CD4-positive, alpha-beta T cell (primary cell): ENCODE measurements at regions of chr14 and their contacts with region 1.

Region 1: DNA sequence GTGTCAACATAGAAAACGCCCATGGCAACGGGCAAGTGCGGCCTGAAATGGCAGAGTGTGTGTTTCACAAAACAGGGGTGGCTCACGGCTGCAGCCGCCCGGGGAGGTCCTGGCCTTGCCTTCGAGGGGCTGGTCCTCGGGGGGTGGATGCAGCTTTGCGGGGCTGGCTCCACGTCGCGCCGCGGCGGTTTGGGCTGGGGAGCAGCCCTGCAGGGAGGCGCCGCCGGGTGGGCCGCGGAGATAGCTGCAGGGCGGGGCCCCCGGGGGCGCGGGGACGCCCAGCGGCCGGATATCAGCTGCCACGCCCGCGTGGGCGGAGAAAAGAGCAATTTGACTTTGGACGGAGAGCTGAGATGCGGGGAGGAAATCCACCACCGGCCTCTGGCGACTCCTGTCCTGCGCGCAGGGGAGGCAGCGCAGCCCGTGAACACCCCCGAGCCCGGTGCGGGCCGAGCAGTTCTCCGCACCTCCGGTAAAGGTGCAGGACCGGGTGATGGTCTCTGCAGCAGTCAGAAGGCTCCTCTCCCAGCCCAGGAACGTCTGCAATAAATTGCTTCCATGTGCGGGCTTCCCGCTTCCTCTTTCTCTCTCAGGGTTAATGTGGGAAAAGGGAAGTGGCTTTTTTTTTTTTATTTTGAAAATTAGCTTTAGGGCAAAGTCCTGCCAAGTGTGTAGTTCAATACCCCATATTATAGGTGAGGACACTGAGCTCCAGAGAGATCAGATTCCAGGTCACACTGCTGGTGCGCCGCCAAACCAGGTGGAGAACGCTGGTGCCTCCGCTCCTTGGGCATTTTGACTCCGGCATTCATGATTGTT is 110.5 kb downstream of the ARF6 start:
- DNase-seq: peak; percentile 41 to 89 (median 70)
- ATAC-seq: peak; percentile 13
- H3K4me3 ChIP-seq: peak overlapping the region; percentile 61
- H3K4me3 Mint-ChIP-seq: peak overlapping the region; percentile 91
- H3K27ac ChIP-seq: peak overlapping the region; percentile 95 to 96
- H3K27ac Mint-ChIP-seq: peak overlapping the region; percentile 95
- H3K4me1 ChIP-seq: peaks cover 65% of the 10 kb centered on the region
- H3K4me1 Mint-ChIP-seq: peaks cover 59% of the 10 kb centered on the region
- H3K27me3 ChIP-seq: no peaks in the 10 kb centered on the region
- H3K27me3 Mint-ChIP-seq: no peaks in the 10 kb centered on the region
- CTCF ChIP-seq: peak; percentile 26

Region 2: GRCh38 chr14:49879683-49880204 is 123.7 kb before region 1 on chr14:
- CTCF ChIA-PET with region 1: interaction called, 6 read pairs
- POLR2A ChIA-PET with region 1: interaction called, 12 read pairs
- intact Hi-C with region 1: no loop called
- DNase-seq: peak; percentile 22 to 86 (median 38)
- ATAC-seq: peak; percentile 94
- H3K4me3 ChIP-seq: no peak overlapping the region
- H3K4me3 Mint-ChIP-seq: no peak overlapping the region
- H3K27ac ChIP-seq: no peak overlapping the region
- H3K27ac Mint-ChIP-seq: peak overlapping the region; percentile 64
- H3K4me1 ChIP-seq: peaks cover 17% of the 10 kb centered on the region
- H3K4me1 Mint-ChIP-seq: peaks cover 18% of the 10 kb centered on the region
- H3K27me3 ChIP-seq: no peaks in the 10 kb centered on the region
- H3K27me3 Mint-ChIP-seq: no peaks in the 10 kb centered on the region
- CTCF ChIP-seq: peak; percentile 46

Region 3: DNA sequence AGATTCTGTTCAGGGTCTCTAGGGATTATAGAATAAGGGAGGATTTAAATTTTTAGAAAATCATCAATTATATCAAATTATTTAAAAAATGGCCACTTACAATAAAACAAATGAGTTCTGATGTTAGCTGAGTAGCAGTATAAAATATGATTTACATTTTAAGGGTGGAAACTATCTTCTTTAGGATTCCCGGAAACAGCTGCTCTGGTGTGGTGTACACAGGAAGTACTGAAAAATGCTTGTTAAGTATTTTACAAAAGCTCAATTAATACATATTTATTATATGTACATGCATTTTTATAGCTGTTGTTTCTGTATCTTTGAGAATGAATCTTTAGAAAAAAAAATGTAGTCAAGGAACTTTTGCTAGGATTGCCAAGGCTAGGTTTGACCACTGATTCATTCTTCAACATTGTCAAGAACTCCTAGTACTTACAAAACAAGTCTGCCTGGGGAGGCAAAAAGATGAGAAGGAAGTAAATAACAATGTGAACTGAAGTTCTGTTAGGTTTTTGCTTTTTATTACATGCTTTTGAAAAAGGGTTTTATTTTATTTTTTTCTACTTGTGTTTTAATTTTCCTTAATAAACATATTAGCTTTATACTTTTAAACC is 62.5 kb before region 1 on chr14:
- CTCF ChIA-PET with region 1: interaction called, 3 read pairs
- POLR2A ChIA-PET with region 1: interaction called, 40 read pairs
- intact Hi-C with region 1: loop called (anchors 2 to 5 kb)
- DNase-seq: peak in 6 of 14 experiments; percentile 10 to 75 (median 34)
- ATAC-seq: peak; percentile 68
- H3K4me3 ChIP-seq: peak overlapping the region; percentile 19
- H3K4me3 Mint-ChIP-seq: peak overlapping the region; percentile 69
- H3K27ac ChIP-seq: peak overlapping the region in 1 of 2 donors; percentile 38
- H3K27ac Mint-ChIP-seq: peak overlapping the region; percentile 57
- H3K4me1 ChIP-seq: peaks cover 47% of the 10 kb centered on the region
- H3K4me1 Mint-ChIP-seq: peaks cover 68% of the 10 kb centered on the region
- H3K27me3 ChIP-seq: no peaks in the 10 kb centered on the region
- H3K27me3 Mint-ChIP-seq: no peaks in the 10 kb centered on the region
- CTCF ChIP-seq: no peak

Region 4: DNA sequence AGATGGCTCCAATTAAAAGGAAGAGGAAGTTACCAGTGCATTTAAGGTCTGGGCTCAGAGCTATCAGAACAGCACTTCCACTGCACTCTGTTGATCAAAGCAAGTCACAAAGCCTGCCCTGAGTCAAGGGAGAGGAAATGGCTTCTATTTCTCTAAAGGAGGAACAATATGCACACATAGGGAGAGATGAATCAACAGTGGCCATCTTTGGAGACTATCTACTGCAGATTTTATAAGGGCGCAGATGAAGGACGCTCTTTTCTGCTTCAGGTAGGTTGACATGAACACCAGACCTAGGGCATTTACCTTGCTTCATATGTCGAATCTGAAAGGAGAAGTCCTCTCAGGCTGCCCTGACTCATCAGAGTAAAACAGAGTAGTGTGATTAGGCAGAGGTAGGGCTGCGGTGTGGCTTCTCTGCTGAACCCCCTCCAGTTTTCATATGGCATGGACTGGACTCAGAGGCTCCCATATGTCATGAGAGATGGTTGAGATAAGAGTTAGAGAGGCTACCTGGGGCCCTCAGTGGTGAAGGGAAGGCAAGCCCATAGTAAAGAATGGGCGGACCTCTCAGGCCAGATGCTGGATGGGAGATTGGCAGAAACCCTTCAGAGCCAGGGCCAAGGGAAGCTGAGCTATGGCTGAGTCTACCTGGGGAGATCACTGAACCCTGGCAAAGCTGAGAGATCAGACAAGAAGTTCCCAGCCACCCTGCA is 26.1 kb before region 1 on chr14:
- CTCF ChIA-PET with region 1: interaction called, 7 read pairs
- POLR2A ChIA-PET with region 1: interaction called, 208 read pairs
- intact Hi-C with region 1: loop called (anchors 1 to 2 kb)
- DNase-seq: peak in 9 of 14 experiments; percentile 12 to 83 (median 40)
- ATAC-seq: peak; percentile 86
- H3K4me3 ChIP-seq: peak overlapping the region; percentile 41
- H3K4me3 Mint-ChIP-seq: peak overlapping the region; percentile 74
- H3K27ac ChIP-seq: peak overlapping the region; percentile 67 to 85
- H3K27ac Mint-ChIP-seq: peak overlapping the region; percentile 90
- H3K4me1 ChIP-seq: peaks cover 94% of the 10 kb centered on the region
- H3K4me1 Mint-ChIP-seq: peaks cover 83% of the 10 kb centered on the region
- H3K27me3 ChIP-seq: no peaks in the 10 kb centered on the region
- H3K27me3 Mint-ChIP-seq: no peaks in the 10 kb centered on the region
- CTCF ChIP-seq: no peak

Region 5: DNA sequence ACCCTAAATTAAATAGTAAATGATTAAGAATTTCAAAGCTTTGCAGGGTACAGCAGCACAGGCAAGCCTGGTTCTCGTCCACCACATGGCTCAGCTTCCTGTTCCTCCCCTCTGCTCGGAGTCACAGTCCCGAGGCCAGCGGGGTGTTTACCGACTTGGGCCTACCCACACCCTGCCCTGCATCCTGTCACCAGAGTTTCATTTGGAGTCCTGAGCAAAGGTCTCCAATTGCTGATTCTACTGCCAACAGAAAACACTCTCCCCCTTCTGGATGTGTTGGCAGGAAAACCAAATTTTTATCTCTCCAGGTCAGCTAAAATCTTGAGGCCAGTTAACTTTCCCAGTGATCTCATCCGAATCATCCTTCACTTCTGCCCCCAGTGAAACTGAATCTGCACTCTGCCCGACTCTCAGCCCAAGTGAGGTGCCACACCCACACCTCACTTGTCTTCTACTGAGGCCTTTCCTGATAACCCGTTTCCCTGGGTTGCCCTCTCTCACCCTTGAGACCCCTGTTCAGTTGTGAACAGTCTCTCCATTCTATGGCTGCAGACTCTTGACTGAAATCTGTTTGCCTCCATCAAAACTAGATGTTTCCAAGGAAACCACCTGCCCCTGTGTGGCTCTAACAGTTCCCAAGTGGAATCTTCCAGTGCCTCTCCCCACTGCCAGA is 41.8 kb after region 1 on chr14:
- CTCF ChIA-PET with region 1: interaction called, 3 read pairs
- POLR2A ChIA-PET with region 1: interaction called, 17 read pairs
- intact Hi-C with region 1: loop called (anchors 2 to 5 kb)
- DNase-seq: peak; percentile 35 to 93 (median 72)
- ATAC-seq: peak; percentile 67
- H3K4me3 ChIP-seq: no peak overlapping the region
- H3K4me3 Mint-ChIP-seq: peak overlapping the region; percentile 43
- H3K27ac ChIP-seq: peak overlapping the region; percentile 48 to 78
- H3K27ac Mint-ChIP-seq: peak overlapping the region; percentile 89
- H3K4me1 ChIP-seq: peaks cover 72% of the 10 kb centered on the region
- H3K4me1 Mint-ChIP-seq: peaks cover 65% of the 10 kb centered on the region
- H3K27me3 ChIP-seq: no peaks in the 10 kb centered on the region
- H3K27me3 Mint-ChIP-seq: no peaks in the 10 kb centered on the region
- CTCF ChIP-seq: no peak

Region 6: DNA sequence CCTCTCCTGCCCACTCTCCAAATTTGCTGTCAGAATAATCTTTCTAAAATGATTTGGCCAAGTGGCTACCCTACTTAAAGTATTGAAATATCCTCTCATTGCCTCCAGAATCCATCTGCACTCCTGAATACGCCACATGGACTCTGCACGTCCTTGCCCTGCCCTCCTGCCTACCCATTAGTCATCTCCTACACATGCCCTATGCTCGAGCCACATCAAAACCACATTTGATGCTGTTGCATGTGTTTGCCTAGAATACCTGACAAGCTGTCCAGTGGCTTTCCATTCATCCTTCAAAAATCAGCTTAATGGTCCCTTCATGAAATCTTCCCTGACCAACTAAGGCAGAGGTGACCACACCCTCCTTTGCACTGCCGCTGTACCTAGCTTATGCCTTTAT is 95.9 kb after region 1 on chr14:
- CTCF ChIA-PET with region 1: interaction called, 4 read pairs
- POLR2A ChIA-PET with region 1: interaction called, 11 read pairs
- intact Hi-C with region 1: loop called (anchors 2 kb)
- DNase-seq: peak in 1 of 14 experiments; percentile 39
- ATAC-seq: no peak
- H3K4me3 ChIP-seq: no peak overlapping the region
- H3K4me3 Mint-ChIP-seq: peak overlapping the region; percentile 12
- H3K27ac ChIP-seq: no peak overlapping the region
- H3K27ac Mint-ChIP-seq: peak overlapping the region; percentile 79
- H3K4me1 ChIP-seq: peaks cover 47% of the 10 kb centered on the region
- H3K4me1 Mint-ChIP-seq: peaks cover 64% of the 10 kb centered on the region
- H3K27me3 ChIP-seq: no peaks in the 10 kb centered on the region
- H3K27me3 Mint-ChIP-seq: no peaks in the 10 kb centered on the region
- CTCF ChIP-seq: no peak